ENCODE measurements at regions of chr1 and their contacts with region 1.

Region 1: DNA sequence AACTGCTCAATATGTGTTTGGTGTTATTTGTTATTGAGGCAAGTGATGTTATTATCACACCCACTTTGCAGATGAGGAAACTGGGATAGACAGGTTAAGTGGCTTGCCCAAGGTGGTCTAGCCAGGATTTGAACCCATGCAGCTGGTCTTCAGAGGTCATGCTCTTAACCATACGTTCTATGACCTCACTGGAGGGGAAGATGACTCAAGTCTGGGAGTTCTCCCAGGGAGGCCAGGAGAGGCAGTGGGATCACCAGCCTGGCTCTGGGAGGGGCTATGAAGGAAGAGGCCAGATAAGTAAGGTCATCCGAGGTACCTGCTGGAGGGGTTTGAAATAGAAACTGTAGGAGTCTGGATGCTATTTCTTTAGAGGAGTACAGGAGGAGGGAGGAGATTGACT is 95.3 kb downstream of the NAV1 start:
- DNase-seq: no peak
- ATAC-seq: no peak
- H3K4me3 ChIP-seq: no peak overlapping the region
- H3K27ac ChIP-seq: peak overlapping the region in 6 of 10 donors; percentile 39 to 76 (median 48)
- H3K4me1 ChIP-seq: peaks cover 41 to 98% (median 76%) of the 10 kb centered on the region in 9 donors
- H3K27me3 ChIP-seq: no peaks in the 10 kb centered on the region
- CTCF ChIP-seq: no peak

Region 2: DNA sequence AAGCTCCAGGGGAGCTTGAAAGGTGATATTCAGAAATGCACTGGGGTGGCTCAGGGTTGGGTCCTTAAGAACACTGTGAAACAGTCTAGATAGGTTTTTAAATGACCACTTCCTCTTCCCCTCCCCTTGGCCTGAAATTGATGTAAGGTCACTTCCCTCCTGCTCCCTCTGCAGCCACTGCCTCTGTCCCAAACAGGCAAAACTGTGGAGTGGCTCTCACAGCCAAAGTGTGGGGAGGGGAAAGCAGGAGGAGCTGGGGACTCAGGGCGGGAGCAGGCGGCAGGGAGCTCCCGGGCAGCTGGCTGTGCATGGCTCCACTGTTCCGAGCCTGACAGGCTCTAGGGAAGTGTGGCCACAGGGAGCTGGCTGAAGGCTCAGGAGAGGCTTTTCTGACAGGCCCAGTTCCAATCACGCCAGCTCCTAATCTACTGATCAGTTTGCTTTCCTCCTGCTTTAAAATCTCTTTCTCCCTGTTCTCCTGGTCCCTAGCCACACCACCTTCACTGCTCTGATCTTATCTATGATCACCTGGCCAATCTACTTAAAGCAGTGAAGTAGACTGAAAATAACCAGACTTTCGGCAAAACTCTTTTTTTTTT is 122.2 kb before region 1 on chr1:
- intact Hi-C with region 1: no loop called
- DNase-seq: peak; percentile 76 to 80
- ATAC-seq: peak; percentile 67 to 88 (median 81)
- H3K4me3 ChIP-seq: peak overlapping the region in 2 of 10 donors; percentile 4 to 10
- H3K27ac ChIP-seq: peak overlapping the region; percentile 49 to 88 (median 77)
- H3K4me1 ChIP-seq: peaks cover 7 to 41% (median 33%) of the 10 kb centered on the region in 9 donors
- H3K27me3 ChIP-seq: no peaks in the 10 kb centered on the region
- CTCF ChIP-seq: peak in 1 of 9 donors; percentile 12

Region 3: GRCh38 chr1:201582705-201583442 is 51.4 kb before region 1 on chr1:
- intact Hi-C with region 1: loop called in 3 of 10 experiments (anchors 5 to 10 kb)
- DNase-seq: no peak
- ATAC-seq: peak in 6 of 8 donors; percentile 22 to 52 (median 34)
- H3K4me3 ChIP-seq: no peak overlapping the region
- H3K27ac ChIP-seq: peak overlapping the region in 3 of 10 donors; percentile 10 to 57 (median 31)
- H3K4me1 ChIP-seq: peaks cover 0 to 48% (median 36%) of the 10 kb centered on the region in 9 donors
- H3K27me3 ChIP-seq: no peaks in the 10 kb centered on the region
- CTCF ChIP-seq: no peak

Region 4: GRCh38 chr1:201703621-201704439 is 69.6 kb after region 1 on chr1:
- intact Hi-C with region 1: no loop called
- DNase-seq: peak; percentile 85 to 90
- ATAC-seq: peak; percentile 89 to 94 (median 90)
- H3K4me3 ChIP-seq: no peak overlapping the region
- H3K27ac ChIP-seq: peak overlapping the region in 9 of 10 donors; percentile 20 to 81 (median 54)
- H3K4me1 ChIP-seq: peaks cover 13 to 46% (median 26%) of the 10 kb centered on the region in 9 donors
- H3K27me3 ChIP-seq: no peaks in the 10 kb centered on the region
- CTCF ChIP-seq: peak; percentile 93 to 99 (median 98)

Measured in heart right ventricle (tissue), 16 donors.